ENCODE measurements at regions of chr16 and their contacts with region 1.

Region 1: DNA sequence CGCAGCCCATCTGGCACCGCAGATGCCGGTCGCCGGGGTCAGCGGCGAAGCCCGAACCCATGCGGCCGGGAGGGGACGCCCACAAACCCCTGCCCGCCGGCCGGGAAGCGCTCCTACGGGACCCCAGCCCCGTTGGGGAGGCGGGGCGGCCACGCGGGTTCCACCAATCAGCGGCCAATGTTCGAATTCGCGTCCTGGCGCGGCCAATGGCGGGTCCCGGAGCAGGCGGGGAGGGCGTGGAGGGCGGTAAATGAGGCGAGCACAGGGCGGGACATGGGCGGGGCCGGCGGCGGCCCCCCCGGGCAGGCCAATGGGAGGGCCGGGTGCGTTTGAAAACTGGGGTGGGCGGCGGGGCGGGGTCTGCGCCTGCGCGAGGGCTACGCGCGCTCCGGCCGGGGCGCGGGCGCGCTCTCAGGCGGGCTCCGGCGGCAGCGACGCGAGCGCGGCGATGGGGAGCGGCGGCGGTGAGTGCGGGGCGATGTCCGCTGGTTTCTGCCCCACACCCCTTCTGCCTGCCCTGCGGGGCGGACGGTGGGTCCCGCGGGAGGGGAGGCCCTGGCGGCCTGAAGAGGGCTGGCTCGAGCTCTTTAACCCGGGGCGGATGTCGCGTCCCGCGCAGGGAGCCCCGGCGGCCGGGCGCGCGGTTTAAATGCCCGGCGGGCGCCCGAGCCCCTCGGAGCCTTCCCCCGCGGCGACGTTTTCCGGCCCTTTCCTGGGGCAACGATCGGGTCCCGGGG is at the start of gene CCNF:
- DNase-seq: peak; percentile 98
- ATAC-seq: peak; percentile 99
- total RNA-seq, gene CCNF: 1.6 to 2.1 TPM

Region 2: DNA sequence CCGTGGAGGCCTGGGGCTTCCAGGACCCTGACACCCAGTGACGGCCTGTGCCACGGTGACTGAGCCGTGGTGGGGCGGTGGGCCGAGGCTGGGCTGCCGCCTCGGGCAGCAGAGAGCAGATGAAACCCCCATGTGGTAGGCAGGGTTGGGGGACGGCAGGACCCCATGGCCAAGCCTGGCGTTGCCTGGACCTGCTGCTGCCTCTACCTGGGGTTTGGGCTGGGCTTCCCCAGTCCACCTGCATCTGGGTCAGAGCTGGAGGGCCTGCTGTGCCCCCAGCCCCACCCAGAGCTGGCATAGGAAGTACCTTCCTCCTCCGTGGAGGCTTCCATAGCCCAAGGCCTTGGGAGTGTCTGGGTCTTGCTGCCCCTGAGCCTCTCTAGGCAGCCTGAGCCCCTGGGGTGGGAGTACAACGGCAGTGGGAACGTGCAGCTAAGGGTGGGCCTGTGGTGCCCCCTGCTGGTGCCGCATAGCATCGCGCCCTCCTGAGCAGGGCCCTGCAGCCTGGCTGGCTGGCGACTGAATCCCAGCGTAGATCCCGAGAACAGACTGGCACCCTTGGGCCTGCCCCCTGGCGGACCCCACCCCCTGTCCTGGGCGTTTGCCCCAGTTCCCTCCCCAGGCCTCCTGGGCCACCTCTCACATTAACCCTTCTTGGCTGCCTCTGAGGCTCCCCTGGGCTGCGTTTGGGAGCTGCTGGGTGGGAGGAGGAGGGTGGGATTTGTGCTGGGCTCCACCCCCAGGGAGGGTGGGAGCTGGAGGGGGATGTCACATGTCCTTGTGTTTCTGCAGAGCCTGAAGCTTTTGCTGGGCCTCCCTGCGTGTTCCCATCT is 71.9 kb after region 1 on chr16:
- intact Hi-C with region 1: loop called in 1 of 2 experiments (anchors 10 kb)
- DNase-seq: peak; percentile 81
- ATAC-seq: peak; percentile 83

Measured in left cardiac atrium (tissue), 4 donors.